ENCODE measurements at regions of chr1 and their contacts with region 1.

Region 1: GRCh38 chr1:163071405-163072255 is 2.5 kb downstream of the RGS4 start:
- DNase-seq: no peak
- ATAC-seq: no peak

Region 2: DNA sequence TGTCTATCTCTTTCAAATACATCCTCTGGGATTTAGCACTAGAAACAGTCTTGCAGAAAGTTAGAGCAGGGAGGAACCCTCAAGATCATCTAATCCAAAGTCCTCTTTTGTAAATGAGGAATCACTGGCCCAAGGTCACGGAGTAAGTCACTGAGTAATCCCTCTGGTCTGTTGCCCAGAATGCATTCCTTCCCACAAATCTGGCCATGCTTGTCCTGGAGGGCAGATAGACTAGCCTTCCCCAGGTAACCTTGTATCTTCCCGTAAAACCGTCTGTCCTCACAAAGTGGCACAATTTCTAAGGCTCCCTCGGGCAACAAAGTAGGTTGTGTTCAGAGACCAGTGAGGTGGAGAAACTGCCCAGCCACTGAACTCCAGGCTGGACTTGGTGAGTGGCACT is 393.2 kb before region 1 on chr1:
- intact Hi-C with region 1: no loop called
- DNase-seq: no peak
- ATAC-seq: peak; percentile 38

Region 3: DNA sequence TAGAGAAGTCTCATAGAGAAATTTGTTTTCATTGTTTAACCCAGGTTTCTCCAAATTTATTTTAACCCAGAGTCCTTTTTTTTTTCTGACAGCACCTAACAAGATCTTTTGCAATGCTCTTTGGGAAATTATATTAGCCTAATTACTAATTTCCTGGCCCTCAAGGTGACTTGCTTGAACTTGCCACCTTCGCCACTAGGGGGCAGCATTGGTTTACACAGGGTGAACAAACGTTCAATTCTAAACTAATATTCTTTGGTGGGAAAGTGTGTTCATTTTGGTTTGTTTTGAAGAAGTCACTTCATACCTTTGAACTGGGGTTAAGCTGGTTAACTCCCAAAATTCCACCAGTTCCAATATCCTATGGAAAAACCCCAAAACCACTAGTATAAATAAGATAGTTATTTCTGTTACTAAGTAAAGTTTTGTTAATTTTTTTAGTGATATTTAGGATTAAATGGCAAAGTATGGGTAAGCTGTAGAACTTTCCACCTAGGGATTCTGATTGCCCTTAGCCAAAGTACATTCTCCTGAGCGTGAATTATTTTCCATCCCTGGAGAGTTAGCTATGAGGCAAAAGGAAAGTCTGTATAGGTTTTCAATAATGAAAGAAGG is 223.7 kb before region 1 on chr1:
- intact Hi-C with region 1: loop called (anchors 5 kb)
- DNase-seq: peak; percentile 81
- ATAC-seq: no peak

Region 4: DNA sequence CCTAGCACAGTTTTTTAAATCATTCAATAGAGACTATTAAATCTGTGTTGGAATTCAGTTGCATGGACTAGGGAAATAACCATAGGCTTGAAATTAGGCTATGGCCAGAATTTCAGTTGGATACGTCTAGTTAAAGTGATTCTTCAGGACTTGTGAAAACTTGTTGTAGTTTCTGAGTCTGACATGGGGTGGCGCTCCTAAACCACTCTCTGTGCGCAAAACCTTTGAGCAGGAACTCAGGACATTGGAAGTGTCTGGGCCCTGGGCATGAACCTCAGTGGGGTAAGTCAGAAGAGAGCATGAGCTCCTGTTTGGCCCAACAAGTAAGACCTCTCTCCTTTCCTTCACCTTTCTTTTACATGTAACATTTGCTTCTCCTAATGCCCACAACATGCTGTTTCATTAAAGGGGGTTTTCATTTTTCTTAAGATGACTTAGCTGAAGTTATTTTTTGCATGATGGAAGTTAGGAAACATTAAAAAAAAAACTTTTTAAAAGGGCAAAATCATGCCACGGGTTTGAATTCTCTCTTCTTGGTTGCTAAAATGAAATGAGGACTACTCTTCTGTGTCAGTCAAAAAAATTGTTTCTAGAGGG is 193.5 kb before region 1 on chr1:
- intact Hi-C with region 1: loop called (anchors 5 kb)
- DNase-seq: no peak
- ATAC-seq: peak; percentile 59

Region 5: DNA sequence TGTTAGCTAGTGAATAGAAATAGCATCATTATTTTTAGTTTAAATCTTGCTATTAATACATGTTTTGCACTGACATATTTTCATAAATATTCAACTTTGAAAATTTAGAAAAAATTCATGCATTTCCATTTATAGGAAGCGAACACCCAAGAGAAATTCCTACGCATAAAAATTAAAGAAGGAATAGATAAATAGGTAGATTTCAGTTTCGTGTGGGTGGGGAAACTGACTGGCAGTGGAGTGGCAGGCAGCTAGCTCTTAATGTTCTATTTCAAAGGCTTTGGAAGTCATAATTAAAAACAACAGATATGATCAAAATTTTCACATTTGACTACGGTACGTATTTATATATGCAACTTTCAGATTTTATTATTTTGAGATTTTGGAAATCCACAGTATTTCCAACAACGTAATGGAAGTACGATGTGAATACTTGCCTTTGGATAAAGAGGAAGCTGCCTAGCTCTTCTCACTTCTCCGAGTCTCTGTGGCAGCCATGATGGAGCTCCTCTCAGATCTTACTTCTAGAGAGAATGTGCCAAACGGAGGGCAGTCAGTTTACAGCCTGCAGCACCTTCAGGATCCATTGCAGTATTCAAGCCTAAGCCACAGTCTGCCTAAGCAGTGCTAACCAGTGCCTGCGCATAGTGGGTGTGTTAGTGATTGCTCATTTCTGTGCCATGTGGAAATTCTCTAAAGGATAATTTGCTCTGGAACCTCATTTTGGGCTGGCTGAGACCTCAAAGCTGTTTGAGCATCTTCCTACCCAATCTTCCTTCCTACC is 65.4 kb before region 1 on chr1:
- intact Hi-C with region 1: no loop called
- DNase-seq: no peak
- ATAC-seq: no peak

Region 6: GRCh38 chr1:163174524-163175437 is 103.2 kb after region 1 on chr1:
- intact Hi-C with region 1: loop called (anchors 5 kb)
- DNase-seq: peak; percentile 83
- ATAC-seq: peak; percentile 71

Region 7: DNA sequence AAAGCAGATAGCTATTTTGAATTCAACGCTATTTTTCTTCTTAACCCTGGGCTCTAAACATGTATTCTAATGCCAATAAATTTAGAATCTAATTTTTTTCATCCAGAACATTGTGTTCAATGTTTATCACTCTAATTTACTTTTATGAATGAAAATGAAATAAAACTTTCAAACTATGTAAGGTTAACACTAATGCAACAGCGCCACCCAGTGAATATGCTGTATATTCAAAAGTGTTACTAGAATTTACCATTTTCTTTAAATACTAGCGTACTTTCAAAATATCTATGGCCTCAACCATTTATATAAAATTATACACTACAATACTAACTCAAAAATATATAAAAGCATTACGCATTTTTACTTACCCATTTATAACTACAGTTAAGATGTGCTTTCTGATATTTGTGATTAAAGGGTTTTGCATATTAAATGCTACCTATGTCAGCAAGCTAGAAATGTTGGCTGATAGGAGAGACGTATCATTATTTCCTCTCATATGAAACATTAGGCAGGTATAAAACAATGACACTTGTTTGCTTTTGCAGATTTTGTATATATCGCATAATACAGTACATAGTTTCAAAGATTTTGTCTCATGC is 244.2 kb after region 1 on chr1:
- intact Hi-C with region 1: loop called (anchors 2 kb)
- DNase-seq: no peak
- ATAC-seq: no peak